CD8-positive, alpha-beta T cell (primary cell): ENCODE measurements at regions of chr19 and their contacts with region 1.

Region 1: DNA sequence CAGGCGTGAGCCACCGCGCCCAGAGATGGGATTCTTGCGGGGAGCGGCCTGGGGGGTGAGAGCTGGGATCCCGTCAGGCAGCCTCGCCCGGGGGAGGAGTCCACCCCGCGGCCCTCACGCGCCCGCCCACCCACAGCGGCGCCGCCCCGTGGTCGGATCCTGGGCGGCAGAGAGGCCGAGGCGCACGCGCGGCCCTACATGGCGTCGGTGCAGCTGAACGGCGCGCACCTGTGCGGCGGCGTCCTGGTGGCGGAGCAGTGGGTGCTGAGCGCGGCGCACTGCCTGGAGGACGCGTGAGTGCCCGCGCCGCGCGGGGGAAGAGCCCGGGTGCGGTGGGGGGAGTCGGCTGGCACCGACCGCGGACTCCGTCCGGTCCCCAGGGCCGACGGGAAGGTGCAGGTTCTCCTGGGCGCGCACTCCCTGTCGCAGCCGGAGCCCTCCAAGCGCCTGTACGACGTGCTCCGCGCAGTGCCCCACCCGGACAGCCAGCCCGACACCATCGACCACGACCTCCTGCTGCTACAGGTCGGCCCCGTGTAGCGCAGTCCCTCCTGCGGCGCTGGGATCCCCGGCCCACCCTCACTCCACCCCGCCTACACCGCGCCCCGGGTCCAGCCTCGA is 1.1 kb downstream of the CFD start:
- DNase-seq: peak; percentile 38 to 86 (median 63)
- ATAC-seq: peak; percentile 45
- H3K4me3 ChIP-seq: peak overlapping the region; percentile 22 to 46
- H3K4me3 Mint-ChIP-seq: peak overlapping the region; percentile 60
- H3K27ac ChIP-seq: no peak overlapping the region
- H3K27ac Mint-ChIP-seq: no peak overlapping the region
- H3K4me1 ChIP-seq: peaks cover 20% of the 10 kb centered on the region
- H3K4me1 Mint-ChIP-seq: peaks cover 17% of the 10 kb centered on the region
- H3K27me3 ChIP-seq: peaks cover 6 to 9% of the 10 kb centered on the region in 2 experiments
- H3K27me3 Mint-ChIP-seq: peaks cover 9% of the 10 kb centered on the region
- CTCF ChIP-seq: no peak

Region 2: GRCh38 chr19:771332-771785 is 89.2 kb before region 1 on chr19:
- CTCF ChIA-PET with region 1: interaction called, 10 read pairs
- POLR2A ChIA-PET with region 1: no interaction called
- intact Hi-C with region 1: loop called (anchors 2 kb)
- DNase-seq: peak in 2 of 9 experiments; percentile 47 to 56
- ATAC-seq: no peak
- H3K4me3 ChIP-seq: no peak overlapping the region
- H3K4me3 Mint-ChIP-seq: no peak overlapping the region
- H3K27ac ChIP-seq: no peak overlapping the region
- H3K27ac Mint-ChIP-seq: no peak overlapping the region
- H3K4me1 ChIP-seq: no peaks in the 10 kb centered on the region
- H3K4me1 Mint-ChIP-seq: peaks cover 2% of the 10 kb centered on the region
- H3K27me3 ChIP-seq: peaks cover 0 to 4% of the 10 kb centered on the region in 2 experiments
- H3K27me3 Mint-ChIP-seq: peaks cover 6% of the 10 kb centered on the region
- CTCF ChIP-seq: no peak

Region 3: GRCh38 chr19:892243-893050 is 31.9 kb after region 1 on chr19:
- CTCF ChIA-PET with region 1: interaction called, 10 read pairs
- POLR2A ChIA-PET with region 1: interaction called, 13 read pairs
- intact Hi-C with region 1: loop called (anchors 1 to 2 kb)
- DNase-seq: peak in 5 of 9 experiments; percentile 37 to 54 (median 48)
- ATAC-seq: peak; percentile 35
- H3K4me3 ChIP-seq: peak overlapping the region; percentile 62 to 67
- H3K4me3 Mint-ChIP-seq: peak overlapping the region; percentile 95
- H3K27ac ChIP-seq: peak overlapping the region; percentile 65 to 98
- H3K27ac Mint-ChIP-seq: peak overlapping the region; percentile 100
- H3K4me1 ChIP-seq: peaks cover 11% of the 10 kb centered on the region
- H3K4me1 Mint-ChIP-seq: peaks cover 36% of the 10 kb centered on the region
- H3K27me3 ChIP-seq: no peaks in the 10 kb centered on the region
- H3K27me3 Mint-ChIP-seq: no peaks in the 10 kb centered on the region
- CTCF ChIP-seq: no peak

Region 4: GRCh38 chr19:913080-913748 is 52.6 kb after region 1 on chr19 and contains the start of gene R3HDM4:
- CTCF ChIA-PET with region 1: interaction called, 70 read pairs
- POLR2A ChIA-PET with region 1: interaction called, 23 read pairs
- intact Hi-C with region 1: no loop called
- DNase-seq: peak; percentile 61 to 92 (median 85)
- ATAC-seq: peak; percentile 46
- H3K4me3 ChIP-seq: peak within 1 kb of the TSS; percentile 83 to 94
- H3K4me3 Mint-ChIP-seq: peak within 1 kb of the TSS; percentile 83
- H3K27ac ChIP-seq: peak within 1 kb of the TSS; percentile 85 to 98
- H3K27ac Mint-ChIP-seq: peak within 1 kb of the TSS; percentile 95
- H3K4me1 ChIP-seq: peaks cover 46% of the 10 kb centered on the region
- H3K4me1 Mint-ChIP-seq: peaks cover 32% of the 10 kb centered on the region
- H3K27me3 ChIP-seq: peaks cover 0 to 21% of the 10 kb centered on the region in 2 experiments
- H3K27me3 Mint-ChIP-seq: peaks cover 3% of the 10 kb centered on the region
- CTCF ChIP-seq: no peak
- total RNA-seq, gene R3HDM4: 242 to 261 TPM

Region 5: GRCh38 chr19:984165-984967 is 123.8 kb after region 1 on chr19 and contains the start of gene WDR18:
- CTCF ChIA-PET with region 1: interaction called, 44 read pairs
- POLR2A ChIA-PET with region 1: interaction called, 5 read pairs
- intact Hi-C with region 1: loop called (anchors 1 to 2 kb)
- DNase-seq: peak; percentile 68 to 94 (median 90)
- ATAC-seq: peak; percentile 85
- H3K4me3 ChIP-seq: peak within 1 kb of the TSS; percentile 92 to 93
- H3K4me3 Mint-ChIP-seq: peak within 1 kb of the TSS; percentile 91
- H3K27ac ChIP-seq: peak within 1 kb of the TSS; percentile 78 to 87
- H3K27ac Mint-ChIP-seq: peak within 1 kb of the TSS; percentile 86
- H3K4me1 ChIP-seq: peaks cover 19% of the 10 kb centered on the region
- H3K4me1 Mint-ChIP-seq: peaks cover 12% of the 10 kb centered on the region
- H3K27me3 ChIP-seq: no peaks in the 10 kb centered on the region
- H3K27me3 Mint-ChIP-seq: no peaks in the 10 kb centered on the region
- CTCF ChIP-seq: no peak
- total RNA-seq, gene WDR18: 20.6 to 22.7 TPM